Activated CD4-positive, alpha-beta T cell treated with anti-CD3 and anti-CD28 coated beads, Interleukin-2, amount 10 ng/mL, durations not matched to agents 7 days and 5 days (primary cell): ENCODE measurements at regions of chr1 and their contacts with region 1.

Region 1: DNA sequence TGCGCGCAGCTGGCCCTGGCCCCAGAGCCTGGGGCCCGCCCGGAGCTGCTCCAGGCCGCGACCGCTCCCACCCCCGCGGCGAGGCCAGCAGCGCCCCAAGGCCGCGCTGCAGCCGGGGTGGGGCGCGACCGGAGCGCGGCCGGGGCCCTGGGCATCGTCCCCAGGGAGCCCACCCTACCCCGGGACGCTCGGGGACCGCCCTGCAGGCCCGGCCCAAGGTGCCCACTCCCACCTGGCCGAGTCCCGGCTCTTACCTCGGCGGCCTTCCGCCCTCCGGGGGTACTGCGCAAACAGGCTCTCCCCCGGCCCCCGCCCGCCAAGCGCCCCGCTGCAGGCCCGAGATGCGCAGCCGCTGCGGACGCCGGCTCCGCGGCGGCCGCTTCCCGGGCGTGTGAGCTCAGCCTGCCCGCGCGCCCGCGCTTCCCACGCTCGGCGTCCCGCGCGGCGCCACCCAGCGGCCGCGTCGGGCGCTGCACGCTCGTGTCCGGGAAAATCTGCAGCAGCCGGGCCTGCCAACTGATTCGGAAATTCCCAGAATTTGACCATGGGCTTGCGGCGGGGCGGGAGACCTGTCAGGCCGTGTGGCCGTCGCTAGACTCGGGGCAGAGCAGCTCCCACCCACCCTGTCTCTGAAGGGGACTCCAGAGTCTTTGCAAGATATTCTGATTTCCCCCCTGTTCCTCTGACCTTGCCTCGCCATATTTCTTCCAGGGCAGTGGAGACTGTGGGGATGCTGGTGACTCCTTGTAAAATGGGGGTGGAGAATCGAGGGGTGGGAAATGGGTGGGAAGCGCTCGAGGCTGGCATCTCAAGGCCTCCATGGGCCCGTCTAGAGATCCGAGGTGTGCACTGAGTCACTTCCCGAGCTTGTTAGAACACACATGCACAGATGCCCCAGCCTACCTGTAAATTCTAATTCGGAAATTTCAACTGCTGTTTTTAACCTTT is 41.9 kb downstream of the CD34 start:
- DNase-seq: peak; percentile 57
- H3K4me3 Mint-ChIP-seq: peak overlapping the region; percentile 93
- H3K27ac Mint-ChIP-seq: peak overlapping the region; percentile 95
- H3K4me1 Mint-ChIP-seq: peaks cover 85% of the 10 kb centered on the region
- H3K27me3 Mint-ChIP-seq: no peaks in the 10 kb centered on the region

Region 2: DNA sequence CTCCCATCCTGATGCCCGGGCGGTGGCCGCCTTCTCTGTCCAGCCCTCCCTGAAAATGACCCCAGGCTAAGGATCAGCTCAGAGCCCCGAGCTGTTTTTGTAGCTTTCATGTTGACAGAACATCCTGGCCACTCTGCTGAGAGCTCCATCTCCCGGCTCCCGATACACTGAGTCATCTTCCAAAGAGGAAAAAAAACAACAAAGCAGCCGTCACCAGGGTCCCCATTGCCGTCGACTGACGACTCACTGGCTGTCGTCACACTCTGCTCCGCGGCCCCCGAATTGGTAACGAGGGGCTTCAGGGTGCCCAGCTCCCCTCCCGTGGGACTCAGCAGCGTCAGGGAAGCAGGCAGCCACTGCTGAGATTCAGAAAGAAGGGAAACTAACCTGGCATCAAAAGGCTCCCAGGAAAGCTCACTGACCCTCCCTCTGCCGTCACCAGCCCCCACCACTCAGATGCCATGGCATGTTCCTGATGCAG is 50.0 kb before region 1 on chr1:
- CTCF ChIA-PET with region 1: interaction called, 39 read pairs
- POLR2A ChIA-PET with region 1: interaction called, 5 read pairs
- DNase-seq: no peak
- H3K4me3 Mint-ChIP-seq: no peak overlapping the region
- H3K27ac Mint-ChIP-seq: no peak overlapping the region
- H3K4me1 Mint-ChIP-seq: peaks cover 58% of the 10 kb centered on the region
- H3K27me3 Mint-ChIP-seq: peaks cover 2% of the 10 kb centered on the region

Region 3: DNA sequence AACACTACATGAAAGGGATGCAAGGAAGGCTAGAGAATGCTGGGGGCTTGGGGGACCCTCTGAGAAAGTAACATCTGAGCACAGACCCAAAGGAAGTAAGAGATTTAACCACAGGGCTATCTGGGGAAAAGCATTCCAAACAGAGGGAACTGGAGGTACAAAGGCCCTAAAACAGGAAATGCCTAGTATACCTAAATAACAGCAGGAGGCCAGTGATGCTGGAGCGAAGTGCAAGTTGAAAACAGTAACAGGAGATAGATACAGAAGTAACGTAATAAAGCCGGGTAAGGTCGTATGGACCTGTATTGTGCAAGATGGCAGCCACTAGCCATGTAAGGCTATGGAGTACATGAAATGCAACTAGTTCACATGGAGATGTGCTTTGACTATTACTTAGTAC is 10.2 kb before region 1 on chr1:
- CTCF ChIA-PET with region 1: interaction called, 23 read pairs
- POLR2A ChIA-PET with region 1: no interaction called
- DNase-seq: no peak
- H3K4me3 Mint-ChIP-seq: no peak overlapping the region
- H3K27ac Mint-ChIP-seq: no peak overlapping the region
- H3K4me1 Mint-ChIP-seq: peaks cover 53% of the 10 kb centered on the region
- H3K27me3 Mint-ChIP-seq: no peaks in the 10 kb centered on the region